ENCODE measurements at regions of chr3 and their contacts with region 1.

Region 1: GRCh38 chr3:3200632-3201212 is 21.2 kb upstream of the CRBN start:
- DNase-seq: peak; percentile 49
- H3K4me3 Mint-ChIP-seq: no peak overlapping the region
- H3K27ac Mint-ChIP-seq: no peak overlapping the region
- H3K4me1 Mint-ChIP-seq: peaks cover 15% of the 10 kb centered on the region
- H3K27me3 Mint-ChIP-seq: no peaks in the 10 kb centered on the region

Region 2: DNA sequence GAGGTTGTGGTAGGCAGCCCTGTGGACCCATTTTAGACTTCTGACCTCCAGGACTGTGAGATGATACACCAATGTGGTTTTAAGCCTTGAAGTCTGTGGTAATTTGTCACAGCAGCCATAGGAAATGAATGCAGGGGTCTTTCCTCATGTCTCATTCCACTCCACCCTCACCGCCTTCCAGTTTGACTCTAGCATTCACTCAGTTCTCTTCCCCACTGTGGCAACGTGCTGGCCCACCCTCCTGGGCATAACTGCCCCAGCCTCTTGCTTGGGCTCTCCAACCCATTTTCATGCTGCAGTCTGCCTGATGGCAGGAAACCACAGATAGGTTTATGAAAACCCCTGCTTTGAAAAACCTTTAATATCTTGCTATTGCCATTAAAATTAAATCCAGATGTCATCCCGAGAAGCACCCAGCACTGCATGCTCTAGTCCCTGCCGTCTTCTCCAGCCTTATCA is 81.3 kb before region 1 on chr3:
- CTCF ChIA-PET with region 1: no interaction called
- POLR2A ChIA-PET with region 1: no interaction called
- intact Hi-C with region 1: no loop called
- DNase-seq: peak; percentile 45
- H3K4me3 Mint-ChIP-seq: no peak overlapping the region
- H3K27ac Mint-ChIP-seq: no peak overlapping the region
- H3K4me1 Mint-ChIP-seq: peaks cover 11% of the 10 kb centered on the region
- H3K27me3 Mint-ChIP-seq: no peaks in the 10 kb centered on the region

Region 3: DNA sequence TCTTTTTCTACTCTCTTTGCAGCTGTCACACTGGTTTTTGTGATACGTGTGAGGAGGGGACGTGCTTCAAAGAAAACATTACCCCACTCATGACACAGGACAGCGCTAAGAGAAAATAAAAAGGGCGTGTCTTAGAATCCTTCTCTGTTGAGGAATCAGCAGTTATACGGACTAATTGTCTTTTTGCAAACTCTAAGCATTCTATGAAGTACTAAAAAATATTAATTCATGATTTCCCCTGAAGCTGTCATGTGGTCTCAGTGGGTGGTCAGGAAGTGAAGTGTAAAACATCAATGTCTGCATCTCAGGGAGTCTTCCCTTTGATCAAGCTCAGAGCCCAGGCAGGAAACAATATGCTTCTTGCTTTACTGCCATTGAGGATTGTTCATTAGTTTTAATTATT is 96.3 kb after region 1 on chr3:
- CTCF ChIA-PET with region 1: interaction called, 3 read pairs
- POLR2A ChIA-PET with region 1: no interaction called
- intact Hi-C with region 1: loop called (anchors 5 kb)
- DNase-seq: no peak
- H3K4me3 Mint-ChIP-seq: no peak overlapping the region
- H3K27ac Mint-ChIP-seq: no peak overlapping the region
- H3K4me1 Mint-ChIP-seq: peaks cover 11% of the 10 kb centered on the region
- H3K27me3 Mint-ChIP-seq: peaks cover 6% of the 10 kb centered on the region

Region 4: GRCh38 chr3:3799173-3800079 is 598.7 kb after region 1 on chr3 and contains the start of gene LRRN1:
- CTCF ChIA-PET with region 1: no interaction called
- POLR2A ChIA-PET with region 1: no interaction called
- intact Hi-C with region 1: loop called (anchors 10 kb)
- DNase-seq: peak; percentile 63
- H3K4me3 Mint-ChIP-seq: peak within 1 kb of the TSS; percentile 67
- H3K27ac Mint-ChIP-seq: no peak within 1 kb of the TSS
- H3K4me1 Mint-ChIP-seq: peaks cover 9% of the 10 kb centered on the region
- H3K27me3 Mint-ChIP-seq: peaks cover 42% of the 10 kb centered on the region
- total RNA-seq, gene LRRN1: 0.17 TPM in 1 of 2 experiments, not detected in the other

Region 5: DNA sequence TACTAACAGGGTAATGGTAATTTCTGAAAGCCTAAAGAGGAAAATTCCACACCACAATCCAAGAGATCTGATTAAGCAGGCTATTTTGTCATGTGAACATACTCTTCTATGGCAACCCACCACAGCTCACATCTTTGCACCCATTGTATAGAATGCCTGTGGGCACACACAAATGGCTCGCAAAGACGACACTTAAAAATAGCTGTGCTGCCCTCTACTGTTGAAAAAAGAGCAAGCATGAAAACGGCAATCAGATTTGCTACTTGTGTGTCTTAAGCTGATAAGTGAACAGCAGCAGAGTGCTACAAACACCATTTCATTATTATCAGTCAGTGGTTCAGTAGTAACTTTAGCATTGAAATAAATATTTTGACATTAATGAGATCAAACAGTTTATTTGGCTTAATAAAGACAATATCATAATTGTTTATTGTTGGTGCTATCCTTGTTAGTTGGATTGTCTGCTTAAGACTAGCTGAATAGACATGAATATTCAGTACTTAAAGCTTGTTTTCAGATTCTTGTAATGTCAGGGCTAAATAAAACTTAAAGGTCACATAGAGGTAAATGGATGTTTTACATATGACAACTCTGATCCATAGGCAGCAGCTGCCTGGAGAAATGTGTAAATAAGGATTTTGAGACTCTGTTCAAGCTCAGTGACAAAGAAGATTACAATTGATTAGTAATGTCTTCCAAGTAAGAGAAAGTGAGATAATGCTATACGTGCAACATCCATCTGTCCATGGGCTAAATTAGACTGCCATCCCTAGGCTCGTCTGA is 797.6 kb after region 1 on chr3:
- CTCF ChIA-PET with region 1: interaction called, 63 read pairs
- POLR2A ChIA-PET with region 1: no interaction called
- intact Hi-C with region 1: loop called (anchors 1 kb)
- DNase-seq: peak; percentile 12
- H3K4me3 Mint-ChIP-seq: no peak overlapping the region
- H3K27ac Mint-ChIP-seq: no peak overlapping the region
- H3K4me1 Mint-ChIP-seq: no peaks in the 10 kb centered on the region
- H3K27me3 Mint-ChIP-seq: no peaks in the 10 kb centered on the region

Region 6: GRCh38 chr3:4271834-4272233 is 1071.1 kb after region 1 on chr3:
- CTCF ChIA-PET with region 1: interaction called, 13 read pairs
- POLR2A ChIA-PET with region 1: no interaction called
- intact Hi-C with region 1: no loop called
- DNase-seq: no peak
- H3K4me3 Mint-ChIP-seq: no peak overlapping the region
- H3K27ac Mint-ChIP-seq: no peak overlapping the region
- H3K4me1 Mint-ChIP-seq: peaks cover 6% of the 10 kb centered on the region
- H3K27me3 Mint-ChIP-seq: no peaks in the 10 kb centered on the region

Region 7: GRCh38 chr3:4290272-4290893 is 1089.7 kb after region 1 on chr3:
- CTCF ChIA-PET with region 1: interaction called, 38 read pairs
- POLR2A ChIA-PET with region 1: no interaction called
- intact Hi-C with region 1: loop called (anchors 1 kb)
- DNase-seq: peak; percentile 31
- H3K4me3 Mint-ChIP-seq: no peak overlapping the region
- H3K27ac Mint-ChIP-seq: no peak overlapping the region
- H3K4me1 Mint-ChIP-seq: peaks cover 7% of the 10 kb centered on the region
- H3K27me3 Mint-ChIP-seq: peaks cover 6% of the 10 kb centered on the region